OCI-LY7 (cell line): ENCODE measurements at regions of chr5 and their contacts with region 1.

Region 1: GRCh38 chr5:173451031-173451430 is 122.8 kb upstream of the STC2 start:
- DNase-seq: peak; percentile 37
- H3K4me3 ChIP-seq: no peak overlapping the region
- H3K27ac ChIP-seq: no peak overlapping the region
- H3K4me1 ChIP-seq: no peaks in the 10 kb centered on the region
- CTCF ChIP-seq: peak; percentile 76

Region 2: GRCh38 chr5:173178369-173178910 is 272.6 kb before region 1 on chr5:
- CTCF ChIA-PET with region 1: no interaction called
- POLR2A ChIA-PET with region 1: no interaction called
- intact Hi-C with region 1: no loop called
- DNase-seq: no peak
- H3K4me3 ChIP-seq: no peak overlapping the region
- H3K27ac ChIP-seq: no peak overlapping the region
- H3K4me1 ChIP-seq: no peaks in the 10 kb centered on the region
- CTCF ChIP-seq: no peak

Region 3: GRCh38 chr5:173315495-173316350 is 135.3 kb before region 1 on chr5:
- CTCF ChIA-PET with region 1: no interaction called
- POLR2A ChIA-PET with region 1: no interaction called
- intact Hi-C with region 1: no loop called
- DNase-seq: no peak
- H3K4me3 ChIP-seq: no peak overlapping the region
- H3K27ac ChIP-seq: no peak overlapping the region
- H3K4me1 ChIP-seq: no peaks in the 10 kb centered on the region
- CTCF ChIP-seq: no peak

Region 4: GRCh38 chr5:173573126-173573960 is 122.3 kb after region 1 on chr5:
- CTCF ChIA-PET with region 1: no interaction called
- POLR2A ChIA-PET with region 1: no interaction called
- intact Hi-C with region 1: loop called (anchors 5 kb)
- DNase-seq: peak; percentile 56
- H3K4me3 ChIP-seq: no peak overlapping the region
- H3K27ac ChIP-seq: no peak overlapping the region
- H3K4me1 ChIP-seq: no peaks in the 10 kb centered on the region
- CTCF ChIP-seq: peak; percentile 97

Region 5: DNA sequence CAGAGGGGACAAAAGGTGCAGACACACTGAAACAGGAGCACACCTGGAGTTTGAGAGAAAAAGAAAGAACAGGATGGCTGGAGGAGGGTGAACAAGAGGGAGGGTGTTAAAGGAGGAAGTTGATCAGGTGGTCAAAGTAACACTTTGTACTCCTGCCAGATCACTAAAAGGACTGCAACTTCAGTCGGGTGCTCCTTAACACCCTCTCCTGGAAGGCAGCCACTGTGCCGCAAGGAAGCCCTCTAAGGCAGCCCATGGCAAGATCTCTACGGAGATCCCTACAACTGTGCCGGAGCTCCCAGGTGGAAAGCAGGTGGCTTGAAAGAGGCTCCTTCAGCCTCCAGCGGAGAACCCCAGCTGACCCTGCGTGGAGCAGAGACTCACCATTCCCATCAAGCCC is 1149.0 kb after region 1 on chr5:
- CTCF ChIA-PET with region 1: no interaction called
- POLR2A ChIA-PET with region 1: no interaction called
- intact Hi-C with region 1: no loop called
- DNase-seq: no peak
- H3K4me3 ChIP-seq: no peak overlapping the region
- H3K27ac ChIP-seq: no peak overlapping the region
- H3K4me1 ChIP-seq: no peaks in the 10 kb centered on the region
- CTCF ChIP-seq: no peak